H1 (cell line): ENCODE measurements at regions of chr17 and their contacts with region 1.

Region 1: DNA sequence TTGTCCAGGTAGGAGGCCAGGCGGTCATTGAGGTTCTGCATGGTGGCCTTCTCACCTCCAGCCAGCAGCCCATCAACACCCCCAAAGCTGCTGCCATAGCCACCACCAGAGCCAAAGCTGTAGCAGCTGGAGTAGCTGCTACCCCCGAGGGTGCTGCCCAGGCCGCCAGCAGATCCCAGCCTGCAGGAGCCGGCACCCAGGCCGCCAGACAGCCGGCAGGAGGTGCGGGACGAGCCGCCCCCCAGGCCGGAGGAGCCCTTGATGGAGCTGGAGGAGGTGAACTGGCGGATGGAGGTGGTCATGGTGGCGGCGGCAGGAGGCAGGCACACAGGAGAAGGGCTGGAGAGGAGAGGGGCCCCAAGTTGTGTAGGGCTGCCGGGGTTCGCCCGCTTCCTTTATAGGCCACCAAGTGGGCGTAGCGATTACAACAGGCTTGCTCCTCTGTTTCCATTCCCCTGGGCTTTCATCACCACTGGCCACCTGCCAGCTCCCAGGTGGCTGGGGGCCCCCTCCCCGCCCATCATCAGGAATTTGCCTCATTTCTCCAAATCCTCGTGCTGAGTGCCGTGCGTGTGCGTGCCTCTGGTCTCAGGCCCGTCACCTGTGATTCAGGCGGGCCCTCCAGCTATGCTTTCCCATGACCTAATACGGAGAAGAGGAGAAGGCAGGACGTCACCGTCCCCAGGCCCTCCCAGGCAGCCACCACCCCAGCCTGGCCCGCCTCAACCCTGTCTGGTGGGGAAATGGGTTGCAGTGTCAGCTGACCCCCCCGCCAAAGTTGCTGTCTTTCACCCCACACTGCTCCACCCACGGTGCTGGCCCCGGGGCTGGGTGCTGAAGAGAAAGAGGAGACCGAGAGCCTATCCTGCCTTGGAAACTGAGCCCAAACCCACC is at the start of gene KRT17:
- DNase-seq: no peak
- H3K4me3 ChIP-seq: no peak within 1 kb of the TSS
- H3K27ac ChIP-seq: no peak within 1 kb of the TSS
- H3K4me1 ChIP-seq: peaks cover 0 to 6% (median 0%) of the 10 kb centered on the region in 4 experiments; a peak in 1 of 7 replicates
- H3K27me3 ChIP-seq: no peaks in the 10 kb centered on the region
- CTCF ChIP-seq: peak in 2 of 3 experiments; percentile 10 to 23; a peak in 2 of 4 replicates
- EP300 ChIP-seq: no peak
- POLR2A ChIP-seq: no peak
- RAD21 ChIP-seq: 0 out of 4 replicates have a peak, but pooled peaks of 1 of the 2 experiments have one; percentile 18
- total RNA-seq, gene KRT17: 0.36 and 0.50 TPM in 2 replicates

Region 2: GRCh38 chr17:41635121-41636097 is 11.0 kb after region 1 on chr17:
- CTCF ChIA-PET with region 1: interaction called, 10 read pairs
- POLR2A ChIA-PET with region 1: interaction called, 4 read pairs
- DNase-seq: no peak
- H3K4me3 ChIP-seq: no peak overlapping the region
- H3K27ac ChIP-seq: no peak overlapping the region
- H3K4me1 ChIP-seq: peaks cover 0 to 19% (median 4%) of the 10 kb centered on the region in 4 experiments; a peak in 2 of 7 replicates
- H3K27me3 ChIP-seq: peaks cover 0 to 3% (median 0%) of the 10 kb centered on the region in 4 experiments; a peak in 1 of 7 replicates
- CTCF ChIP-seq: no peak
- EP300 ChIP-seq: no peak
- POLR2A ChIP-seq: no peak
- RAD21 ChIP-seq: no peak

Region 3: GRCh38 chr17:41812381-41813151 is 188.1 kb after region 1 on chr17 and contains the start of gene FKBP10:
- CTCF ChIA-PET with region 1: no interaction called
- POLR2A ChIA-PET with region 1: no interaction called
- DNase-seq: peak; percentile 80 to 91
- H3K4me3 ChIP-seq: peak within 1 kb of the TSS; percentile 70 to 94 (median 81)
- H3K27ac ChIP-seq: no peak within 1 kb of the TSS
- H3K4me1 ChIP-seq: peaks cover 0 to 23% (median 7%) of the 10 kb centered on the region in 4 experiments; a peak in 6 of 7 replicates
- H3K27me3 ChIP-seq: peaks cover 0 to 6% (median 3%) of the 10 kb centered on the region in 4 experiments; a peak in 4 of 7 replicates
- CTCF ChIP-seq: 0 out of 4 replicates have a peak, but pooled peaks of 1 of the 3 experiments have one; percentile 3
- EP300 ChIP-seq: peak in 1 of 2 experiments; percentile 37; a peak in 1 of 3 replicates
- POLR2A ChIP-seq: peak in 1 of 2 experiments; percentile 51; a peak in 1 of 3 replicates
- RAD21 ChIP-seq: no peak
- total RNA-seq, gene FKBP10: 173 and 179 TPM in 2 replicates